ENCODE measurements at regions of chr9 and their contacts with region 1.

Region 1: GRCh38 chr9:130770679-130771442 is 64.2 kb upstream of the ABL1 start:
- DNase-seq: peak in 2 of 3 donors; percentile 5 to 6
- H3K4me3 ChIP-seq: no peak overlapping the region
- H3K4me3 Mint-ChIP-seq: no peak overlapping the region
- H3K27ac ChIP-seq: no peak overlapping the region
- H3K27ac Mint-ChIP-seq: no peak overlapping the region
- H3K4me1 ChIP-seq: peaks cover 29 to 30% of the 10 kb centered on the region in 2 donors
- H3K4me1 Mint-ChIP-seq: peaks cover 38% of the 10 kb centered on the region
- H3K27me3 ChIP-seq: no peaks in the 10 kb centered on the region
- H3K27me3 Mint-ChIP-seq: no peaks in the 10 kb centered on the region
- CTCF ChIP-seq: peak; percentile 67

Region 2: DNA sequence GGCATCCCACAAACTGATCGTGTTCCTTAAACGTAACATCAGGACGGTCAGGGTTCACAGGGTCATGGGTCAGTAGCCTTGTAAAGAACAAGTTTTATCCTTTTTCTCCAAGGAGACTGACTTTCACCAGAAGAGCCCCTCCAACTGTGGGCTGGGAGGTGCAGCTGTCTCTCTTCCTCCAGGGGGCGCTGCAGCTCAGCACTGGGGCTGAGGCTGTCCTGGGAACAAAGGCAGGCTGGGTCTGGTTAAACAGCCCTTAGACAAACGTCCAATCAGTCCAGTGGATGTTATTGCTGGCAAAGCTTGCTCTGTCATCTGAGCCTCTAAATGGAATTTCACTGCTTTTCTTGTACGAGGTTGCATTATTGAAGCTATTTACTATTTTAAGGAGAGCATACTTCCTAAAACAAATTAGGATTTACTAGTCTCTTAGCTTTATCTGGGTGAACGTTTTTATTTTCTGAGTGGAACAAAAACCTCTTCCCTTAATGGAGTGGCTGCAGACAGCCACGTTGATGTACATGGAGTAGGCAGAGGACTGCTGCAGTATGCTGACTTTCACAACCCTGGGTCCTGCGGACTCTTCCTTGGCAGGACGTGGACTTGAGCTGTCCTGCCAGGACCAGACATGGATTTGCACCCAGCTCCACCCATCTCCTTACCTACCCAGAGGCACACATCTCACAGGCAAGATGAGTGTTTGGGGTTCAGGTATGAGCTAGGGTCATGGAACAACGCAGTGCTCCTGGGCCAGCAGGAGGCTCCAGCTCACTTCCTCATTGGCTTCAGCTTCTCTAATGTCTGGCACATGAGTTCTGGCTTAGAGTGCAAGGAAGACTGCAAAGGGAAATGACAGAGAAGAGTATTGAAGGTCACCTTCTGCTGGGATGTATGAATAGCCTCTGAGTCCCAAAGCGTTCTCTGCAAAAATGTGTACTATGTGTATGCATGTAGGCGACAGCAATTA is 69.5 kb before region 1 on chr9:
- intact Hi-C with region 1: no loop called
- DNase-seq: peak; percentile 36 to 53 (median 48)
- H3K4me3 ChIP-seq: no peak overlapping the region
- H3K4me3 Mint-ChIP-seq: no peak overlapping the region
- H3K27ac ChIP-seq: no peak overlapping the region
- H3K27ac Mint-ChIP-seq: peak overlapping the region in 1 of 7 donors; percentile 41
- H3K4me1 ChIP-seq: no peaks in the 10 kb centered on the region
- H3K4me1 Mint-ChIP-seq: peaks cover 8% of the 10 kb centered on the region
- H3K27me3 ChIP-seq: no peaks in the 10 kb centered on the region
- H3K27me3 Mint-ChIP-seq: peaks cover 0 to 2% (median 1%) of the 10 kb centered on the region in 3 donors
- CTCF ChIP-seq: peak; percentile 95

Region 3: GRCh38 chr9:130756037-130756436 is 14.8 kb before region 1 on chr9:
- intact Hi-C with region 1: no loop called
- DNase-seq: peak in 1 of 3 donors; percentile 11
- H3K4me3 ChIP-seq: peak overlapping the region in 2 of 3 experiments; percentile 12 to 38
- H3K4me3 Mint-ChIP-seq: peak overlapping the region; percentile 31 to 60
- H3K27ac ChIP-seq: peak overlapping the region in 1 of 2 donors; percentile 30
- H3K27ac Mint-ChIP-seq: peak overlapping the region in 3 of 7 donors; percentile 15 to 74 (median 37)
- H3K4me1 ChIP-seq: peaks cover 17 to 27% of the 10 kb centered on the region in 2 donors
- H3K4me1 Mint-ChIP-seq: peaks cover 26% of the 10 kb centered on the region
- H3K27me3 ChIP-seq: no peaks in the 10 kb centered on the region
- H3K27me3 Mint-ChIP-seq: peaks cover 0 to 3% (median 0%) of the 10 kb centered on the region in 3 donors
- CTCF ChIP-seq: no peak

Region 4: GRCh38 chr9:130860458-130861316 is 89.8 kb after region 1 on chr9:
- intact Hi-C with region 1: loop called (anchors 5 to 10 kb)
- DNase-seq: peak; percentile 1 to 28 (median 8)
- H3K4me3 ChIP-seq: no peak overlapping the region
- H3K4me3 Mint-ChIP-seq: peak overlapping the region in 1 of 2 donors; percentile 28
- H3K27ac ChIP-seq: no peak overlapping the region
- H3K27ac Mint-ChIP-seq: peak overlapping the region in 3 of 7 donors; percentile 24 to 38 (median 26)
- H3K4me1 ChIP-seq: no peaks in the 10 kb centered on the region
- H3K4me1 Mint-ChIP-seq: peaks cover 4% of the 10 kb centered on the region
- H3K27me3 ChIP-seq: no peaks in the 10 kb centered on the region
- H3K27me3 Mint-ChIP-seq: peaks cover 0 to 2% (median 0%) of the 10 kb centered on the region in 3 donors
- CTCF ChIP-seq: no peak

Region 5: DNA sequence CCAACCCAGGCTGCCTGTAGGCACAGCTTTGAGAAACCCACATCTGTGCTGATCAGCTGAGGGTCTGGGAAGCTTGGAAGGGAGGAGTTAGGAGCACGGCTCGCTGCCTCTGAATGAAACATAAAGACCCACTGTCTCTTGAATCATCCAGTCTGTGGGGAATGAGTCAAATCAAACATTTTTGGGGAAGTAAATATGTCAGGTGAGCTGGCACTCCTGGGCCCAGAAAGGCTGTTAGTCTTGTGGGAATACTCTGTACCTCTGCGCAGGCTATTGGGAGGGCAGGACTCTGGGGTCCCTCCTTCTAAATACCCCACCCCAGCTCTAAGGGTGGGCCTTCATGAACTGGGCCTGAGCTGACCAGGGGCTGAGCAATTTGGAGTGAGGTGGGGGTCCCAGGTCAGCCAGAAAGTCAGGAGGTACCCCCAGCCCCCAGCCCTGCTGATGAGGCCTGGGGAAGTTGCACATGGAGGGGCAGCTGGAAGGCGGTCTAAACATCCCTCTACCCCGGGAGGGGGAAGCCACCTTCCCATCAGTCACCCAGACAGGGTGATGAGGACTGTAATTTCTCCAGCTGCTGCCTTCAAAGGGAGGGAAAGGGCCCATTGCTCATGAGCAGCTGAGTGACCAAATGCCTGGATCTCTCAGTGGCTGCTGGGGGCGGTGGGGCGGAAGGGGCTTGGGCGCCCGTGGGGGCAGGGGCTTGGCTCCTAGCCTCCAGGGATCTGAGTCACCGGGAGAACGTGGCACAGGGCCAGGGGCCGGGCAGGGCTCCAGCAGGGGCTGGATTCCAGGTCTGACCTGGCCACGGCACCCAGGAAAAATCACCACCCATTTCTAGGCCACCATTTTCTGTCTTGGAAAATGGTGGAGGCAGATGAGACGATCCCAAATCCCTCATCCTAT is 157.4 kb after region 1 on chr9:
- intact Hi-C with region 1: no loop called
- DNase-seq: no peak
- H3K4me3 ChIP-seq: no peak overlapping the region
- H3K4me3 Mint-ChIP-seq: no peak overlapping the region
- H3K27ac ChIP-seq: no peak overlapping the region
- H3K27ac Mint-ChIP-seq: no peak overlapping the region
- H3K4me1 ChIP-seq: no peaks in the 10 kb centered on the region
- H3K4me1 Mint-ChIP-seq: no peaks in the 10 kb centered on the region
- H3K27me3 ChIP-seq: peaks cover 0 to 11% of the 10 kb centered on the region in 2 donors
- H3K27me3 Mint-ChIP-seq: peaks cover 18 to 28% (median 23%) of the 10 kb centered on the region in 3 donors
- CTCF ChIP-seq: no peak

Measured in CD14-positive monocyte (primary cell).